Activated naive CD4-positive, alpha-beta T cell treated with anti-CD3 and anti-CD28 coated beads for 36 hours (primary cell): ENCODE measurements at regions of chr17 and their contacts with region 1.

Region 1: GRCh38 chr17:48593840-48594537 is 410 bp upstream of the HOXB5 start:
- DNase-seq: peak; percentile 87
- H3K4me3 Mint-ChIP-seq: peak overlapping the region; percentile 77
- H3K27ac Mint-ChIP-seq: no peak overlapping the region
- H3K4me1 Mint-ChIP-seq: peaks cover 36% of the 10 kb centered on the region
- H3K27me3 Mint-ChIP-seq: peaks cover 90% of the 10 kb centered on the region

Region 2: DNA sequence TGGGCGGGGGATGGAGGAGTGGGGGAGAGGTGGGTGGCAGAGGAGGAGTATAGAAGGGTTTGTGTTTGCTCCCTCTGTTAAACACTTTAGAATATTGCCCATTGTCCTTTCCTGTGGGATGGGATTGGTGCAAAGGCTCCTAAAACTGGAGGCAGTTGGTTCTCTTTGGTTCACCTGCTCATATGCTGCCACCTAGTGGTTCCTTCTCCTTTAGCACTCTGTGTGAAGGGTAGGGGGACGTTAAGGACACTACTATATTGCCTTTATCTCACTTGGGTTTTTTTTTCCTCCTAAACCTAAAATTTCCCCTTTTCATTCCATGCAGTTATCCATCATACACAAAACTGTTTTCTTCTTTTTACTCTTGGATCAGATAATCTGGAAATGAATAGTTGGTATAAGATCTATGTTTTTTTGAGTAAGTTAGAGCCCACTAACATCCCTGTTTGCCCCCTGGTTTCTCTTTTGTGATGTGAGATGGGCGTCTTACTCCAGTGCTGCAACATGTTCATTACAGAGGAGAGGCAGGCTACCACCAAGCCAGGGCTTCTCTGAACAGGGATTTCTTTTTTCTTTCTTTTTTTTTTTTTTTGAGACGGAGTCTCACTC is 462.7 kb before region 1 on chr17:
- CTCF ChIA-PET with region 1: interaction called, 3 read pairs
- intact Hi-C with region 1: loop called (anchors 2 kb)
- DNase-seq: peak; percentile 75
- H3K4me3 Mint-ChIP-seq: no peak overlapping the region
- H3K27ac Mint-ChIP-seq: no peak overlapping the region
- H3K4me1 Mint-ChIP-seq: no peaks in the 10 kb centered on the region
- H3K27me3 Mint-ChIP-seq: no peaks in the 10 kb centered on the region

Region 3: GRCh38 chr17:48259694-48260291 is 334.2 kb before region 1 on chr17:
- CTCF ChIA-PET with region 1: interaction called, 18 read pairs
- intact Hi-C with region 1: loop called (anchors 2 kb)
- DNase-seq: peak; percentile 18
- H3K4me3 Mint-ChIP-seq: no peak overlapping the region
- H3K27ac Mint-ChIP-seq: no peak overlapping the region
- H3K4me1 Mint-ChIP-seq: peaks cover 5% of the 10 kb centered on the region
- H3K27me3 Mint-ChIP-seq: no peaks in the 10 kb centered on the region

Region 4: DNA sequence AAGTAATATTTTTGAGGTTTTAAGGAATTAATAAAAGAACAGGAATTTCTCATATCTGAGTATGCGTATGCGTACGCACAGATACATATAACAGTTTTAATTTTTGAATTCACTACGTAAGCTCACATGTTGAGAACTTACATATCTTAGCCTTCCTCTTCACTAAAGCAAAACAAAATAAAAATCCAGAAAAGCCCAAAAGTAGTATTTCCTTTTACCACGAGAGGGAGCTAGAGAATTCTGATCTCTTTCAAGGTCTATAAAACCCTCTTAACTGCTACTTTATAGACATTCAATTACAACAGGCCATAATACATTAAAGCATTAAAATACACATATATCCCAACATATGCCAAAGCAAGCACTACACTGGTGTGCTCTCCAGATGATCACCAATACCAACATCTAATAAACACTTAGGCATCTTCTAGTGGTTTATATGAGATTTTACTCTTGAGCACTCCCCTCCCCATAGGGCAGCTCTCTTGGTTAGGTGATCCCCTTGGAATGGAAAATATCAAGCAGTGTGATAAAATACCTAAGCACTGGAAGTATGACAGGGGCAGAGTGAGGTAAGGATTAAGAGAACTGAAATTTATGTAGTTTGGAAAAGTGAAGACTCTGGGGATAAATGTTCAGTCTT is 258.0 kb before region 1 on chr17:
- CTCF ChIA-PET with region 1: interaction called, 40 read pairs
- intact Hi-C with region 1: loop called (anchors 1 kb)
- DNase-seq: no peak
- H3K4me3 Mint-ChIP-seq: no peak overlapping the region
- H3K27ac Mint-ChIP-seq: no peak overlapping the region
- H3K4me1 Mint-ChIP-seq: peaks cover 6% of the 10 kb centered on the region
- H3K27me3 Mint-ChIP-seq: no peaks in the 10 kb centered on the region

Region 5: GRCh38 chr17:48492401-48493298 is 101.3 kb before region 1 on chr17:
- CTCF ChIA-PET with region 1: interaction called, 24 read pairs
- intact Hi-C with region 1: no loop called
- DNase-seq: peak; percentile 74
- H3K4me3 Mint-ChIP-seq: peak overlapping the region; percentile 45
- H3K27ac Mint-ChIP-seq: no peak overlapping the region
- H3K4me1 Mint-ChIP-seq: peaks cover 19% of the 10 kb centered on the region
- H3K27me3 Mint-ChIP-seq: peaks cover 13% of the 10 kb centered on the region

Region 6: GRCh38 chr17:48610282-48611211 is 16.6 kb after region 1 on chr17 and contains the start of gene HOXB7:
- CTCF ChIA-PET with region 1: interaction called, 19 read pairs
- intact Hi-C with region 1: loop called (anchors 2 kb)
- DNase-seq: peak; percentile 77
- H3K4me3 Mint-ChIP-seq: peak within 1 kb of the TSS; percentile 89
- H3K27ac Mint-ChIP-seq: no peak within 1 kb of the TSS
- H3K4me1 Mint-ChIP-seq: peaks cover 33% of the 10 kb centered on the region
- H3K27me3 Mint-ChIP-seq: peaks cover 71% of the 10 kb centered on the region
- total RNA-seq, gene HOXB7: 0.29 TPM in 1 of 2 experiments, not detected in the other

Region 7: DNA sequence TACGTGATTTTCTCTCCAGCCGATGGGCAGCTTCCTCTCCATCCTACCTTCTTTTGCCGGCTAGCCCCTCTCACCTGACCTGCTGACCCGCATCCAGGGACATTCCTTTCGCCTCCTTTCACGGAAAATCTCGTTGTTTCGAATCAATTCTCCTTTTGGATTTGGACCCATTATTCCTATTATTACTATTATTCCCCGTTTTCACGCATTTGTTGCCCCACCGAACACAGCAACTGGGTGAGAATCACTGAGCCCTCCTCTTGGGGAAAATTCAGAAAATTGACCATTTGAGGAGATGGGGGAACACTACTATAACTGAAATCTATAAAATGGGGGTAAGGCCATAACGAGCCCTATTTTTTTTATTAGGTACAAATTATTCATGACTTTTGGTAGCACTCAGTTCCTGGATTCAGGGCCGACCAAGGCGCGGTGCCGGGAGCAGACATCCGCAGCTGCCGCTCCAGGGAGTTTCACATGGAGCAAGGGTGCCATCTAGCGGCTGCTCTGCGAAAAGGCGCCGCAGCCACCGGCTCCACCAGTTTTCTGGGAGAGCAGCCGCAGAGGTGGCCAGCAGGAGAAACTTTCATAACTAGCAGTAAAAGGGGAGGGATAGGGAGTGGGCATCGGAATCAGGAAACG is 24.4 kb after region 1 on chr17:
- CTCF ChIA-PET with region 1: interaction called, 19 read pairs
- intact Hi-C with region 1: loop called (anchors 2 kb)
- DNase-seq: peak; percentile 88
- H3K4me3 Mint-ChIP-seq: no peak overlapping the region
- H3K27ac Mint-ChIP-seq: no peak overlapping the region
- H3K4me1 Mint-ChIP-seq: peaks cover 40% of the 10 kb centered on the region
- H3K27me3 Mint-ChIP-seq: peaks cover 84% of the 10 kb centered on the region

Region 8: GRCh38 chr17:48787828-48788227 is 193.8 kb after region 1 on chr17:
- CTCF ChIA-PET with region 1: no interaction called
- intact Hi-C with region 1: no loop called
- DNase-seq: no peak
- H3K4me3 Mint-ChIP-seq: no peak overlapping the region
- H3K27ac Mint-ChIP-seq: no peak overlapping the region
- H3K4me1 Mint-ChIP-seq: no peaks in the 10 kb centered on the region
- H3K27me3 Mint-ChIP-seq: peaks cover 16% of the 10 kb centered on the region

Region 9: DNA sequence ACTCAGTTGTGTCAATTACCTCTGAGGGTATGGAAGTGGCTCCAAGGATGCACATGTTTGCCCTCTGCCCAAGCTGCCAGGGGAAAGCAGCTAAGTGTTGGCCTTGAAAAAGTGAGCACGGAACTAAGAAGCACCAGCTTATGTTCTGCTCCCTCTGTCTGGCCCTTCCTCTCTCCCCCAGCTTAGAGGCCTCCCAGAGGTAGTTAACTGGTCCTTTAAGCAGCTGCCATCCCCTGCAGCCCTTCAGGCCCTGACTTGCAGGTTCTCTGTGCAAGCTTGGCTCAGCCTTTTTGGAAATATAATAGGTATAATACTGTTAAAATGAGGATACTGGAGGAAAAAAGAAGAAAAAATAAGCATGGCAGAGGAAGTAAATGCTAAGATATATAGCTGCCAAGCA is 307.3 kb after region 1 on chr17:
- CTCF ChIA-PET with region 1: no interaction called
- intact Hi-C with region 1: no loop called
- DNase-seq: no peak
- H3K4me3 Mint-ChIP-seq: no peak overlapping the region
- H3K27ac Mint-ChIP-seq: no peak overlapping the region
- H3K4me1 Mint-ChIP-seq: no peaks in the 10 kb centered on the region
- H3K27me3 Mint-ChIP-seq: no peaks in the 10 kb centered on the region